Heart left ventricle (tissue), 16 donors: ENCODE measurements at regions of chr6 and their contacts with region 1.

Region 1: GRCh38 chr6:132663661-132664060 is 4.7 kb upstream of the TAAR1 start:
- DNase-seq: no peak
- ATAC-seq: no peak
- H3K4me3 ChIP-seq: no peak overlapping the region
- H3K27ac ChIP-seq: no peak overlapping the region
- H3K4me1 ChIP-seq: no peaks in the 10 kb centered on the region
- H3K27me3 ChIP-seq: no peaks in the 10 kb centered on the region
- CTCF ChIP-seq: no peak
- POLR2A ChIP-seq: no peak

Region 2: GRCh38 chr6:132675749-132676148 is 12.1 kb after region 1 on chr6:
- intact Hi-C with region 1: loop called in 1 of 10 experiments (anchors 1 kb)
- DNase-seq: no peak
- ATAC-seq: peak in 1 of 4 donors; percentile 45
- H3K4me3 ChIP-seq: no peak overlapping the region
- H3K27ac ChIP-seq: no peak overlapping the region
- H3K4me1 ChIP-seq: peaks cover 0 to 20% (median 0%) of the 10 kb centered on the region in 12 donors
- H3K27me3 ChIP-seq: peaks cover 0 to 3% (median 0%) of the 10 kb centered on the region in 9 donors
- CTCF ChIP-seq: no peak
- POLR2A ChIP-seq: no peak